K562 (cell line): ENCODE measurements at regions of chr2 and their contacts with region 1.

Region 1: GRCh38 chr2:237744613-237745249 is 53.8 kb upstream of the RBM44 start:
- DNase-seq: peak; percentile 64 to 78 (median 76)
- ATAC-seq: peak; percentile 98
- H3K4me3 ChIP-seq: no peak overlapping the region
- H3K27ac ChIP-seq: no peak overlapping the region
- H3K4me1 ChIP-seq: peaks cover 0 to 4% of the 10 kb centered on the region in 2 experiments; a peak in 3 of 5 replicates
- H3K27me3 ChIP-seq: no peaks in the 10 kb centered on the region
- CTCF ChIP-seq: peak; percentile 85 to 90 (median 86)
- EP300 ChIP-seq: no peak
- POLR2A ChIP-seq: no peak
- RAD21 ChIP-seq: peak; percentile 90 to 92

Region 2: DNA sequence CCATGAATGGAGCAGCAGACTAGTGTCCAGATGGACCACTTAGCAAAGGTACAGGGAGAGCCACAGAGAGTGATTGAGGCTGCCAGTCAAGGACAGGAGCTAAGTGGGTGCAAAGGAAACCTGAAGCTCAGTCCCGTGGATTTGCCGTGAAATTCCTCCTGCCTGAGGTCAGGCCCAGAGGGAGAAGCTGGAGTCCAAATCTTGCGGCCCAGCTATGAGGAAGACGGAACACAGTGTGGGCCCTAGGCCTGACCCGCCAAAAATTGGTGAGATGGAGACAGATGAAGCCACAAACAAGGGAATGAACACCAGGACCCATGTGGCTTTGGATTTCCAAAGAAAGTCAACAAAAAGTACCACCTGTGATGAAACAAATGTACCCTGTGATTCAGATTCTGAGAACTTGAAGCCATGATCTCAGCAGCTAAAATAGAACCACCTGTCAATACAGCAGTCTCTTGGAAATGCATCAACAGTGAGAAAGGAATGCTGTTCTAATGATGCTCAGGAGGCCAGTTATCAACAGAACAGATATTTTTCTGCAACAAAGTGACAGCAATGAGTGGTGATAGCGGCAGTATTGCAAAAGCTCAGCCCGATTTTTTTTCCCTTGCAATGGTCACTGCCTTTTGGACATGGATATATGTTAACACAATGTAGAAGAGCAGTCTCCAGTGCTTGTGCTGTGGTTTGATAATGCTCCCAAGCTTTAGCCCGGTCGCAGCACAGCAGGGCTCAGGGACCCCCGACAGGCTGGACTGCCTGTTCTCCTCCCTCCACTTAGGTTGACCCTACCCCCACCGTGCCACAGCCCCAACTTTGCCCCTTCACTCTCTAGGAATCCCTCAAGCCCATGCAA is 341.5 kb before region 1 on chr2:
- CTCF ChIA-PET with region 1: no interaction called
- POLR2A ChIA-PET with region 1: no interaction called
- in situ Hi-C with region 1: no loop called
- intact Hi-C with region 1: no loop called
- DNase-seq: no peak
- ATAC-seq: no peak
- H3K4me3 ChIP-seq: no peak overlapping the region
- H3K27ac ChIP-seq: no peak overlapping the region
- H3K4me1 ChIP-seq: no peaks in the 10 kb centered on the region
- H3K27me3 ChIP-seq: peaks cover 0 to 10% of the 10 kb centered on the region in 2 experiments; a peak in 2 of 5 replicates
- CTCF ChIP-seq: no peak
- EP300 ChIP-seq: no peak
- POLR2A ChIP-seq: no peak
- RAD21 ChIP-seq: no peak

Region 3: DNA sequence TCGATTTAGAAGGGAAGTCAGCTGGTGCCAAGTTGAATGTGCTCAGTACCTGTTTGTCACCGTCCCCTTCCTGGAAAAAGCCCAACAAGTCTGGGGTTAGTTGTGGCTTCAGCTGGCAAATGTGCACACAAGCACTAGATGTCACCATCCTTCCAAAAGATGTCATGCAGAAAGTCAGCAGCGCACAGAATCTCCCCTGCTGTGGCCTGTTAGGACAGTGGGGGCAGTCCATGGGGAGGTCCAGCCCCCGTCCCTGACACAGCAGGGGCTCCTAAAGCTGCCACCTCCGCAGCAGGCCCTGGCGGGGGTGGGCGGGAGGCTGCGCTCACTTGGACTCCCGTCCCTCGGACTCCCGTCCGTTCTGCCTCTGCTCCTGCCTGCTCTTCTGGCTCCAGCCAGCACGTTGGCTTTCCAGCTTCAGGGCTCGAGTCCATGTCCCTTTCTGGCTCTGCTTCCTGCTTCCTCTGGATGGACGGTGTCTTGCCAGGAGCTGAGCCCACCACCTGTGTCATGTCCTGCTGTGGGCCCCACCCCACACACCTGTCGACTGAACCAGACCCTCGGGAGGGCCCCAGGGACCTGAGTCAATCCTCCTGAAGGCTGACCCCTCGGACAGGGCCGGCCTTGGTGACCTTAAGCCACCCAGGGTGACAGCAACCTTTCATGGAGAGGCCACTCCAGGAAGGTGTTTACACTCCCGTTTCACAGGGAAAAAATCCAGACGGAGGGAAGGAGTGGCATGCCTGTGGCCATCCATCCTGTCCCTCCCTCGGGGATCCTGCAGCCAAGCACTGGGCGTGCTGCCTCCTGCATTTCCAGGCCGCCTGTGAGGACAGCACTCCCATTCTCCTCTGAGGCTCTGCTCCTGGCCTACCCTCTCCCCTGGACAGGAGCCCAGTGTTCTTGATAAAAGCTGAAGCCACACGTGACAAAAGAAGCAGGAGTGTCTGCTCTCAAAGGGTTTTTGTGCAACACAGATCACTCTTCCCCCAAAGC is 162.7 kb before region 1 on chr2:
- CTCF ChIA-PET with region 1: no interaction called
- POLR2A ChIA-PET with region 1: no interaction called
- in situ Hi-C with region 1: no loop called
- intact Hi-C with region 1: loop called (anchors 10 kb)
- DNase-seq: peak in 2 of 4 experiments; percentile 15
- ATAC-seq: peak; percentile 78
- H3K4me3 ChIP-seq: no peak overlapping the region
- H3K27ac ChIP-seq: no peak overlapping the region
- H3K4me1 ChIP-seq: peaks cover 0 to 5% of the 10 kb centered on the region in 2 experiments; a peak in 1 of 5 replicates
- H3K27me3 ChIP-seq: peaks cover 4 to 55% of the 10 kb centered on the region in 2 experiments; a peak in 3 of 5 replicates
- CTCF ChIP-seq: peak; percentile 26 to 37 (median 27); a peak in 4 of 6 replicates
- EP300 ChIP-seq: no peak
- POLR2A ChIP-seq: no peak
- RAD21 ChIP-seq: peak; percentile 11 to 56; a peak in 2 of 4 replicates

Region 4: GRCh38 chr2:237674731-237675276 is 69.9 kb before region 1 on chr2:
- CTCF ChIA-PET with region 1: interaction called, 59 read pairs
- POLR2A ChIA-PET with region 1: interaction called, 3 read pairs
- in situ Hi-C with region 1: loop called (anchors 5 kb)
- intact Hi-C with region 1: loop called (anchors 1 kb)
- DNase-seq: peak in 1 of 4 experiments; percentile 12
- ATAC-seq: peak; percentile 68
- H3K4me3 ChIP-seq: no peak overlapping the region
- H3K27ac ChIP-seq: no peak overlapping the region
- H3K4me1 ChIP-seq: peaks cover 0 to 10% of the 10 kb centered on the region in 2 experiments; a peak in 4 of 5 replicates
- H3K27me3 ChIP-seq: peaks cover 17 to 26% of the 10 kb centered on the region in 2 experiments; a peak in 4 of 5 replicates
- CTCF ChIP-seq: no peak
- EP300 ChIP-seq: no peak
- POLR2A ChIP-seq: no peak
- RAD21 ChIP-seq: no peak

Region 5: GRCh38 chr2:237726401-237726830 is 18.3 kb before region 1 on chr2:
- CTCF ChIA-PET with region 1: no interaction called
- POLR2A ChIA-PET with region 1: no interaction called
- in situ Hi-C with region 1: no loop called
- intact Hi-C with region 1: no loop called
- DNase-seq: no peak
- ATAC-seq: no peak
- H3K4me3 ChIP-seq: no peak overlapping the region
- H3K27ac ChIP-seq: no peak overlapping the region
- H3K4me1 ChIP-seq: peaks cover 3 to 5% of the 10 kb centered on the region in 2 experiments; a peak in 2 of 5 replicates
- H3K27me3 ChIP-seq: no peaks in the 10 kb centered on the region
- CTCF ChIP-seq: no peak
- EP300 ChIP-seq: no peak
- POLR2A ChIP-seq: no peak
- RAD21 ChIP-seq: no peak